Transverse colon (tissue), 4 donors: ENCODE measurements at regions of chr13 and their contacts with region 1.

Region 1: GRCh38 chr13:49840266-49840665 is 47.8 kb upstream of the KPNA3 start:
- DNase-seq: no peak
- H3K4me3 ChIP-seq: no peak overlapping the region
- H3K27ac ChIP-seq: no peak overlapping the region
- H3K4me1 ChIP-seq: no peaks in the 10 kb centered on the region
- H3K27me3 ChIP-seq: no peaks in the 10 kb centered on the region
- CTCF ChIP-seq: no peak
- EP300 ChIP-seq: no peak
- POLR2A ChIP-seq: no peak

Region 2: GRCh38 chr13:49652355-49653305 is 187.6 kb before region 1 on chr13:
- in situ Hi-C with region 1: loop called in 3 of 4 experiments (anchors 5 to 25 kb)
- intact Hi-C with region 1: no loop called
- DNase-seq: peak; percentile 32
- H3K4me3 ChIP-seq: no peak overlapping the region
- H3K27ac ChIP-seq: no peak overlapping the region
- H3K4me1 ChIP-seq: peaks cover 0 to 9% (median 0%) of the 10 kb centered on the region in 4 donors
- H3K27me3 ChIP-seq: no peaks in the 10 kb centered on the region
- CTCF ChIP-seq: peak; percentile 25 to 54 (median 52)
- EP300 ChIP-seq: no peak
- POLR2A ChIP-seq: no peak

Region 3: GRCh38 chr13:49669735-49670309 is 170.4 kb before region 1 on chr13:
- in situ Hi-C with region 1: loop called in 2 of 4 experiments (anchors 10 to 25 kb)
- intact Hi-C with region 1: loop called (anchors 5 kb)
- DNase-seq: peak; percentile 60
- H3K4me3 ChIP-seq: no peak overlapping the region
- H3K27ac ChIP-seq: no peak overlapping the region
- H3K4me1 ChIP-seq: no peaks in the 10 kb centered on the region
- H3K27me3 ChIP-seq: no peaks in the 10 kb centered on the region
- CTCF ChIP-seq: peak; percentile 56 to 72 (median 60)
- EP300 ChIP-seq: no peak
- POLR2A ChIP-seq: no peak